Activated CD8-positive, alpha-beta T cell treated with anti-CD3 and anti-CD28 coated beads, Interleukin-2, amount 10 ng/mL, durations not matched to agents 7 days and 5 days (primary cell): ENCODE measurements at regions of chr6 and their contacts with region 1.

Region 1: DNA sequence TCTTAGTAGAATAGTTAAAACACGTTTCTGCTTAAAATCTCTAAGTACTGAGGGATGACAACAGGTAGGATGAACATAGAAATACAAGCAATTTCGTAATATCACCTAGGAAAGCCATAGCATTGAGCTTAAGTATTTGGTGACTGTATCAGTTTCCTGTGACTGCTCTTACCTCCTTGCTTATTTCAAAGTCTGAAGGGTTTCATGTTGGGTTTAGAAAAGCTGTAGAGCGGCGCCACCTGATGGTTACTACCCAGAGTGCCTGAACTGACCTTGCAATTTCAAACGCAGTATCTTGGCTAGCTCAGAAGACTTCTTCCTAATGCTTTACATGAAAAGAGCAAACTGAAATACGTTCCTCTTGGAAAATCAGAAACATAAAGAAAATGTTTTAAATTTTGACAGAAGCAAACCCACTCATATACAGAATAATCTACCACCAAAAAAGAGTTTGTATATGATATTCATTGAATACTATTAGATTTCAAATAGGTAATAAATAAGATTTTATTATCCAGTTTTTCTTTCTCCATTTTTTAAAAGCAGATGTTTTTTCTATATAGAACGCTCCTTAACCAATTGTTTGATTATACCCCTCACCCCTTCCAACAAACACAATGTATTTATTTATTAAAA is 82.3 kb upstream of the RIPOR2 start:
- DNase-seq: peak; percentile 89
- ATAC-seq: peak; percentile 86
- H3K4me3 Mint-ChIP-seq: no peak overlapping the region
- H3K27ac Mint-ChIP-seq: peak overlapping the region; percentile 62
- H3K4me1 Mint-ChIP-seq: peaks cover 40% of the 10 kb centered on the region
- H3K27me3 Mint-ChIP-seq: no peaks in the 10 kb centered on the region

Region 2: DNA sequence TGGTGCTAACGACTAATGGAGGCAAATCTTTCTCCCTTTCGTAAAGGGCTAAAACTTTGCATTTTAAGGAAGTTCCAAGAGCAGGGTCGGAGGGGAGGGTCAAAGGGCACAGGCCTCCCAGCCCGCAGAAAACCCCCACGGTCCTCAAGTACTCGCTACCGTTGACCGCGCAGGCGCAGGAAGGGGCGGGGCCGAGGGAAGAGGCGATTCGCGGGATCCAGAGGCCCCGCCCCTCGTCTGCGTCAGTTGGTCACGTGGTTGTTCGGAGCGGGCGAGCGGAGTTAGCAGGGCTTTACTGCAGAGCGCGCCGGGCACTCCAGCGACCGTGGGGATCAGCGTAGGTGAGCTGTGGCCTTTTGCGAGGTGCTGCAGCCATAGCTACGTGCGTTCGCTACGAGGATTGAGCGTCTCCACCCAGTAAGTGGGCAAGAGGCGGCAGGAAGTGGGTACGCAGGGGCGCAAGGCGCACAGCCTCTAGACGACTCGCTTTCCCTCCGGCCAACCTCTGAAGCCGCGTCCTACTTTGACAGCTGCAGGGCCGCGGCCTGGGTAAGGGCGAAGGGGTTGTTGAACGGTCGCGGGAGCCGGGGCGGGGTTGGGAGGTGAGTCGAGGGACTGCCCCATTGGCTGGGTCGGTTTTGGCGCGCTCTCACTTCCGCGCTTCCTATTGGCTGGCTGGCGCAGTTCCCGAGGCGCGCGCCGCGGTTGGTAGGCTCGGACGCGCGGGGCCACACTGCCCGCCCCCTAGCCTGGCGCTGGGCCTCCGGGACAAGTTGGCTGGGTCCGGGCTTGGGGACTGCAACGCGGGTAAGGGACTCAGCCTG is 243.1 kb before region 1 on chr6 and contains the start of gene GMNN:
- CTCF ChIA-PET with region 1: interaction called, 10 read pairs
- POLR2A ChIA-PET with region 1: interaction called, 4 read pairs
- DNase-seq: peak; percentile 99
- ATAC-seq: peak; percentile 97
- H3K4me3 Mint-ChIP-seq: peak within 1 kb of the TSS; percentile 99
- H3K27ac Mint-ChIP-seq: peak within 1 kb of the TSS; percentile 100
- H3K4me1 Mint-ChIP-seq: peaks cover 37% of the 10 kb centered on the region
- H3K27me3 Mint-ChIP-seq: no peaks in the 10 kb centered on the region
- total RNA-seq, gene GMNN: 87.0 to 88.4 TPM

Region 3: DNA sequence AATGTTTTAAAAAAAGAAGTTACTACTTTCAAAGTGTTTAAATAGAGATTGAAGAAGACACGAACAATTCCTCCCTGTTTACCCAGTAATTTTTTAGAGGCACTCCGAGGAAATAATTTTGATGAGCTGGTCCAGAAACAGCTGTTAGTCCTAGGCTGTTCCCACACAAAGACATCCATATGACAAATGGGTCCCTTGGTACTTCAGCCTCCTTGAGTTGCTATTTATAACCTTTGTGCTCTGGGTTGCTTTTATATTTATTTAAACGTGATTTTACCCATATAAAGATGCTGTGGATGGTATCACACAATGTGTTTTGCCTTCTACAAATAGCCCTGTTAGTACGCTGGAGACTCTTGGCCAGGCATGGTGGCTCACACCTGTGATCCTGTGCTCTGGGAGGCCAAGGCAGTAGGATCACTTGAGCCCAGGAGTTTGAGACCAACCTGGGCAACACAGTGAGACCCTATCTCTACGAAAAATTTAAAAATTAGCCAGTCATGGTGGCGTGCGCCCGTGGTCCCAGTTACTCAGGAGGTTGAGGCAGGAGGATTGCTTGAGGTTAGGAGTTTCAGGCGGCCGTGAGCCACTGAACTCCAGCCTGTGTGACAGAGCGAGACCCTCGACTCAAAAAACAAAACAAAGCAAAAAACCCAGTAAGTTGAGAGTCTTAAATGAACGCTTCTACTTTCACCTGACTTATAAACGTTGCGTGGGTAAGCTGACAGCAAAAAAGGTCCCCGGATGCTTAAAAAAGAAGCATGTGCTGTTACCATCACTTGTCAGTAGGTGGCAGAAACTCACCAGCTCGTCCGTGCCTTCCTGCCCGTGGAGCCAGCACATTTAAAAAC is 162.4 kb before region 1 on chr6:
- CTCF ChIA-PET with region 1: interaction called, 183 read pairs
- POLR2A ChIA-PET with region 1: interaction called, 6 read pairs
- DNase-seq: peak; percentile 84
- ATAC-seq: peak; percentile 49
- H3K4me3 Mint-ChIP-seq: no peak overlapping the region
- H3K27ac Mint-ChIP-seq: peak overlapping the region; percentile 64
- H3K4me1 Mint-ChIP-seq: peaks cover 52% of the 10 kb centered on the region
- H3K27me3 Mint-ChIP-seq: no peaks in the 10 kb centered on the region

Region 4: GRCh38 chr6:24919004-24919892 is 98.8 kb before region 1 on chr6:
- CTCF ChIA-PET with region 1: interaction called, 63 read pairs
- POLR2A ChIA-PET with region 1: interaction called, 3 read pairs
- DNase-seq: peak; percentile 44
- ATAC-seq: peak; percentile 50
- H3K4me3 Mint-ChIP-seq: peak overlapping the region; percentile 53
- H3K27ac Mint-ChIP-seq: peak overlapping the region; percentile 62
- H3K4me1 Mint-ChIP-seq: peaks cover 86% of the 10 kb centered on the region
- H3K27me3 Mint-ChIP-seq: no peaks in the 10 kb centered on the region

Region 5: DNA sequence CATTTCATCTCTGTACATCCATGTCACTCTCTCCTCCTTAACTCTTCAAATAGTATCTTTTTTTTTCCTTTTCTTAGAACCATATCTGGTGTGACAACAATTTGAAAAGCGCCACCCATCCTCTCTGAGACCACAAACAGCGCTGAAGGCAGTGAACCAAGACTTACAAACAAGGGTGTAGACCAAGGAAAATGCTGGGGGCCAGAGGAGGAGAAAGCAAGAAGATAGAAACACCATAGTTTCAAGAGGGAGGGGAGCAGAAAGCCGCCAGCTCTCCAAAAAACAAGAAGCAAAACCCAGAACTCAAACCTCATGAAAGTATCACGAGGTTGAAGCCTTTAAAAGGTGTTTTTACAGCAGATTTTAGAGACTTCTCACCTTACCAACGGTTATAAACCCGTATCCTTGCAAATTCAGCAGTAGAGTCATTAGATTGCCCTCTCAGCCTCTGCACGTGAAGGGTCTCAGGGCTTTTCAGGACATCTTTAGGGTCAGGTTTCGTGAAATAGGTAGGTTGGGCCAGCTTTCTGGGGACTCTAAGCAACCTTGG is 69.0 kb before region 1 on chr6:
- CTCF ChIA-PET with region 1: interaction called, 12 read pairs
- POLR2A ChIA-PET with region 1: no interaction called
- DNase-seq: peak; percentile 87
- ATAC-seq: peak; percentile 69
- H3K4me3 Mint-ChIP-seq: peak overlapping the region; percentile 46
- H3K27ac Mint-ChIP-seq: peak overlapping the region; percentile 94
- H3K4me1 Mint-ChIP-seq: peaks cover 74% of the 10 kb centered on the region
- H3K27me3 Mint-ChIP-seq: no peaks in the 10 kb centered on the region

Region 6: GRCh38 chr6:25035527-25036435 is 17.7 kb after region 1 on chr6:
- CTCF ChIA-PET with region 1: interaction called, 113 read pairs
- POLR2A ChIA-PET with region 1: no interaction called
- DNase-seq: peak; percentile 39
- ATAC-seq: peak; percentile 45
- H3K4me3 Mint-ChIP-seq: peak overlapping the region; percentile 73
- H3K27ac Mint-ChIP-seq: peak overlapping the region; percentile 81
- H3K4me1 Mint-ChIP-seq: peaks cover 68% of the 10 kb centered on the region
- H3K27me3 Mint-ChIP-seq: no peaks in the 10 kb centered on the region

Region 7: DNA sequence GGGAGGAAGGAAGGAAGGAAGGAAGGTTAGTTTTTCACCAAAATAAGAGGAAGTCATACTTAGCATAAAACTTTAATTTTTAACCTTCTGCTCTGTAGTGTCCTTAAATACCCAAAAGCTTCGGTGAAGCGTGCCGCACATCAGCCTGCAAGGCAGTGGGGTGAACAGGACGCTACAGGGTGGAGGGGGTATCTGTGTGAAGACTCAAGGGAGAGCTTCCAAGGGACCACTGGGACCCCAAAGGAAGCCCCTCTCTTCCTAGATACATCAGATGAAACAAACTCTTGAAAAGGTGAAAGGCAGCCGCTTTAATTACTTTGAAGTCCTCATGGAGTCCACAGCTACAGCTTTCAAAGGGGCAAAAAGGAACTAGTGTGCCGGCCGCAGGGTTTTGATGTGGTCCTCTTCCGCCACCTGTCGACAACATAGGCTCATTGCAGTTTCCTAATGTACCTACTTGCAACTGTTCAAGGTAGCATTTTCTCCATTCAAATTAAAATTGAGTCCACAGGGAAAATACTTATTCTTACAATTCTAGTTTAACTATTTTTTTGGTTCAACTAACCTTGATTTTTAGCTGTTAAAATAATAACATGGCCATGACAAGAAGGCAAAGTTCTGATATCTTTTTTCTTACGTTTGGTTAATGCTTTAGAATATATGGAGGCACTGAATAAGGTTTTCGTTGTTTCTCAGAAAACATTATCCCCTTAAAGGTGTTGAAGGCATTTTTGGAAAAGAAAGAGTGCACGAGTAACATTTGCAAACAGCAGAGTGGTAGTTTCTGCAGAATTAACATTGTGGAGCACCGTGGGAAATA is 52.7 kb after region 1 on chr6:
- CTCF ChIA-PET with region 1: interaction called, 54 read pairs
- POLR2A ChIA-PET with region 1: no interaction called
- DNase-seq: peak; percentile 90
- ATAC-seq: peak; percentile 95
- H3K4me3 Mint-ChIP-seq: peak overlapping the region; percentile 53
- H3K27ac Mint-ChIP-seq: peak overlapping the region; percentile 91
- H3K4me1 Mint-ChIP-seq: peaks cover 7% of the 10 kb centered on the region
- H3K27me3 Mint-ChIP-seq: peaks cover 3% of the 10 kb centered on the region

Region 8: GRCh38 chr6:25205629-25206028 is 187.6 kb after region 1 on chr6:
- CTCF ChIA-PET with region 1: no interaction called
- POLR2A ChIA-PET with region 1: no interaction called
- DNase-seq: no peak
- ATAC-seq: no peak
- H3K4me3 Mint-ChIP-seq: no peak overlapping the region
- H3K27ac Mint-ChIP-seq: no peak overlapping the region
- H3K4me1 Mint-ChIP-seq: no peaks in the 10 kb centered on the region
- H3K27me3 Mint-ChIP-seq: peaks cover 19% of the 10 kb centered on the region